Ascending aorta (tissue), 2 donors: ENCODE measurements at regions of chr1 and their contacts with region 1.

Region 1: GRCh38 chr1:91622616-91623015 is 122.0 kb downstream of the CDC7 start:
- DNase-seq: peak; percentile 46 to 89
- H3K4me3 ChIP-seq: no peak overlapping the region
- H3K27ac ChIP-seq: peak overlapping the region in 1 of 2 donors; percentile 10
- H3K4me1 ChIP-seq: peaks cover 0 to 11% of the 10 kb centered on the region in 2 donors
- H3K27me3 ChIP-seq: no peaks in the 10 kb centered on the region
- CTCF ChIP-seq: no peak

Region 2: GRCh38 chr1:90488451-90488850 is 1134.2 kb before region 1 on chr1:
- intact Hi-C with region 1: loop called (anchors 10 kb)
- DNase-seq: no peak
- H3K4me3 ChIP-seq: no peak overlapping the region
- H3K27ac ChIP-seq: no peak overlapping the region
- H3K4me1 ChIP-seq: no peaks in the 10 kb centered on the region
- H3K27me3 ChIP-seq: no peaks in the 10 kb centered on the region
- CTCF ChIP-seq: no peak